ENCODE measurements at regions of chr17 and their contacts with region 1.

Region 1: GRCh38 chr17:64420143-64420971 is 28.6 kb upstream of the MILR1 start:
- DNase-seq: peak in 2 of 4 donors; percentile 57 to 71
- ATAC-seq: peak; percentile 90
- H3K4me3 ChIP-seq: no peak overlapping the region
- H3K27ac ChIP-seq: no peak overlapping the region
- H3K4me1 ChIP-seq: peaks cover 0 to 22% of the 10 kb centered on the region in 2 donors
- H3K27me3 ChIP-seq: no peaks in the 10 kb centered on the region
- CTCF ChIP-seq: peak; percentile 68 to 81

Region 2: GRCh38 chr17:63946440-63947367 is 473.7 kb before region 1 on chr17:
- intact Hi-C with region 1: no loop called
- DNase-seq: peak; percentile 20 to 84 (median 50)
- ATAC-seq: peak; percentile 89
- H3K4me3 ChIP-seq: no peak overlapping the region
- H3K27ac ChIP-seq: no peak overlapping the region
- H3K4me1 ChIP-seq: peaks cover 0 to 12% of the 10 kb centered on the region in 2 donors
- H3K27me3 ChIP-seq: no peaks in the 10 kb centered on the region
- CTCF ChIP-seq: peak; percentile 77 to 84

Region 3: DNA sequence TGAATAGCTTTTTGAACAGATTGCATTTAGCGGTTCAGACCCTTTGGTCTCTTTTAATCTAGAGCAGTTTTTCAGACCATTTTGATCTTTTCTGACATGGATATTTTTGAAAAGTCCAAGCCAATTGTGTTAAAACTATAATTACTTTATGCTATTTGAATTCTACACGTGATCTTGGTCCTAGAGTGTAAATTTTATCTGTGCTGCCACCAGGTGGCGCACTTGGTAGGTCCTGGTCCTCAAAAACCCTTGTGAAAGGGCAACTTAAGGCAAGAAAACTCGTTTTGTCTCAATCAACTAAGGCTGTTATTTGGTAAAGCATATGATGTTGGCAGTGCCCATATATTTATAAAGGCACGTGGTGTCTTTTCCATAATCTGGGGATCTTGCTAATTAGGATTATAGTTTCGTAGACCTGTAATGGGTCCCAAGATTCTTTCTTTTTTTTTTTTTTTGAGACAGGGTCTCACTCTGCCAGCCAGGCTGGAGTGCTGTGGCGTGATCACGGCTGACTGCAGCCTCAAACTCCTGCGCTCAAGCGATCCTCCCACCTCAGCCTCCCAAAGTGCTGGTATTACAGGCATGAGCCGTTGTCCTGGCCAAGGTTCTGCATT is 113.4 kb before region 1 on chr17:
- intact Hi-C with region 1: loop called in 1 of 2 experiments (anchors 5 kb)
- DNase-seq: peak in 3 of 4 donors; percentile 47 to 83 (median 68)
- ATAC-seq: peak; percentile 69
- H3K4me3 ChIP-seq: no peak overlapping the region
- H3K27ac ChIP-seq: no peak overlapping the region
- H3K4me1 ChIP-seq: peaks cover 7 to 21% of the 10 kb centered on the region in 2 donors
- H3K27me3 ChIP-seq: no peaks in the 10 kb centered on the region
- CTCF ChIP-seq: peak; percentile 82 to 84

Region 4: GRCh38 chr17:64320613-64321553 is 99.5 kb before region 1 on chr17:
- intact Hi-C with region 1: loop called in 1 of 2 experiments (anchors 5 kb)
- DNase-seq: peak in 2 of 4 donors; percentile 64 to 65
- ATAC-seq: peak; percentile 88
- H3K4me3 ChIP-seq: no peak overlapping the region
- H3K27ac ChIP-seq: peak overlapping the region in 1 of 2 donors; percentile 29
- H3K4me1 ChIP-seq: peaks cover 2 to 86% of the 10 kb centered on the region in 2 donors
- H3K27me3 ChIP-seq: no peaks in the 10 kb centered on the region
- CTCF ChIP-seq: peak; percentile 72 to 77

Region 5: DNA sequence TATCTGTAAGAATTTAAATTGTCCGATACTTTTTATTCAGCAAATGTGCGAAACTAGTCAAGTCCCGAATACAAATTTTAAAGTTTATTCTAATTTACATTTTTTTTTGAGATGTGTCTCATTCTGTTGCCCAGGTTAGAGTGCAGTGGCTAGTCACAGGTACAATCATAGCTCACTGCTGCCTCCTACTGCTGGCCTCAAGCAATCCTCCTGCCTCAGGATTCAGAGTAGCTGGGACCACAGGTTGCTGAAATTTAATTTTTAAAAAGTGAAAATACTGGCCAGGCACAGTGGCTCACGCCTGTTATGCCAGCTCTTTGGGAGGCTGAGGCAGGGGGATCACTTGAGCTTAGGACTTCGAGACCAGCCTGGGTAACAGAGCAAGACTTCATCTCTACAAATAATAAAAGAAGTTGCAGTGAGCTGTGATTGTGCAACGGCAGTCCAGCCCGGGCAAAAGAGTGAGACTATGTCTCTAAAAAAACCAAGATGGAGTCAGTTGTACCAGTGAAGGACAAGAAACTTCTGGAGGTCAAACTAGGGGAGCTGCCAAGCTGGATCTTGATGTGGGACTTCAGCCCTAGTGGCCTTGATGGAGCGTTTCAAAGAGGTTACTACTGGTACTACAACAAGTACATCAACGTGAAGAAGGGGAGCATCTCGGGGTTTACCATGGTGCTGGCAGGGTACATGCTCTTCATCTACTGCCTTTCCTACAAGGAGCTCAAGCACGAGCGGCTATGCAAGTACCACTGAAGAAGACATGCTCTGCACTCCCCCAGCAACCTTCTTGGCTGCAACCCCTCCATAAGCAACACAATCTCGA is 70.9 kb after region 1 on chr17:
- intact Hi-C with region 1: loop called in 1 of 2 experiments (anchors 5 kb)
- DNase-seq: peak in 1 of 4 donors; percentile 43
- ATAC-seq: peak; percentile 79
- H3K4me3 ChIP-seq: no peak overlapping the region
- H3K27ac ChIP-seq: no peak overlapping the region
- H3K4me1 ChIP-seq: peaks cover 11 to 46% of the 10 kb centered on the region in 2 donors
- H3K27me3 ChIP-seq: no peaks in the 10 kb centered on the region
- CTCF ChIP-seq: peak; percentile 52 to 71

Region 6: DNA sequence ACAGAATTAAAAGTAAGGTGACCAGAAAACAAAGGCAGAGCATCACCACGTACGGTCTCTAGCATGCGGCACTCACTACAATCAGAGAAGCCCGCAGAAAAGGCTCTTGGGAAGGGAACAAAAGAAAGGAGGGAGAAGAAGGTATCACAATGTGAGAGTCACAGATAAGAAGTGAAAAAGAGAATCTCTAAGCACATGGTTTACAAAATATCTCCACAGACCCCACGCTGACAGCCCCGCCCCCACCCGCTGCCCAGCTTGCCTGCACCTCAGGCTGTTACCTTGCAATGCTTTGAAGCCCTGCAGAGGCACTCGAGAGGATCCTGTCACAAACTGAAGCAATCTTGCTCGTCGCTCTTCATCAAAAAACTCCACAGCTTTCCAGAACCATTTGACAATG is 127.0 kb after region 1 on chr17:
- intact Hi-C with region 1: no loop called
- DNase-seq: no peak
- ATAC-seq: no peak
- H3K4me3 ChIP-seq: no peak overlapping the region
- H3K27ac ChIP-seq: no peak overlapping the region
- H3K4me1 ChIP-seq: no peaks in the 10 kb centered on the region
- H3K27me3 ChIP-seq: no peaks in the 10 kb centered on the region
- CTCF ChIP-seq: no peak